ENCODE measurements at regions of chr5 and their contacts with region 1.

Region 1: GRCh38 chr5:107184066-107184465 is 486.7 kb downstream of the EFNA5 start:
- DNase-seq: peak; percentile 1
- ATAC-seq: no peak
- H3K4me3 ChIP-seq: no peak overlapping the region
- H3K27ac ChIP-seq: no peak overlapping the region
- H3K4me1 ChIP-seq: no peaks in the 10 kb centered on the region
- H3K27me3 ChIP-seq: no peaks in the 10 kb centered on the region
- CTCF ChIP-seq: no peak

Region 2: DNA sequence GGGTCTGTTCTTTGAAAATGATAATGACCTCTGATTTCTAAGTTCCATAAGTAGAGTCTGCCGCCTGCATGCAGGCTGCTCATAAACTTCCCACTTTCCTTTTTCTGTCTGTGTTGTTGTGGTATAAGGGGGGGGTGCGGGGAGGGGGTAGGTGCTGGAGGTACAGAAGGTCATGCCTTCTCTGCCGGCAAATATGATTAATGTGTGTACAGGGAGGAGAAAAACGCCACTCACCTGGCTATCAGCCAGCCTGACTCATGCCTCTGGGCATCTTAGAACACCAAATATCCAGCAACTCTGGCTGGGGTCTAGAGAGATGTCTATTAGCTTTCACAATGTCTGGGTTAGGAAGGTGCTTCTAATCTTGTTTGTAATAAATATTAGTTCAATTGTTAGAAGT is 358.4 kb after region 1 on chr5:
- CTCF ChIA-PET with region 1: no interaction called
- POLR2A ChIA-PET with region 1: interaction called, 10 read pairs
- intact Hi-C with region 1: no loop called
- DNase-seq: peak; percentile 96
- ATAC-seq: peak; percentile 93
- H3K4me3 ChIP-seq: peak overlapping the region; percentile 47
- H3K27ac ChIP-seq: peak overlapping the region; percentile 75
- H3K4me1 ChIP-seq: peaks cover 18% of the 10 kb centered on the region
- H3K27me3 ChIP-seq: no peaks in the 10 kb centered on the region
- CTCF ChIP-seq: no peak